ENCODE measurements at regions of chr10 and their contacts with region 1.

Region 1: GRCh38 chr10:26881600-26882331 is 21.0 kb upstream of the ABI1 start:
- DNase-seq: no peak
- H3K4me3 Mint-ChIP-seq: no peak overlapping the region
- H3K27ac Mint-ChIP-seq: no peak overlapping the region
- H3K4me1 Mint-ChIP-seq: no peaks in the 10 kb centered on the region
- H3K27me3 Mint-ChIP-seq: peaks cover 12% of the 10 kb centered on the region

Region 2: GRCh38 chr10:26682931-26683330 is 198.8 kb before region 1 on chr10:
- CTCF ChIA-PET with region 1: interaction called, 7 read pairs
- POLR2A ChIA-PET with region 1: no interaction called
- intact Hi-C with region 1: loop called (anchors 1 kb)
- DNase-seq: no peak
- H3K4me3 Mint-ChIP-seq: no peak overlapping the region
- H3K27ac Mint-ChIP-seq: peak overlapping the region; percentile 57
- H3K4me1 Mint-ChIP-seq: peaks cover 19% of the 10 kb centered on the region
- H3K27me3 Mint-ChIP-seq: peaks cover 4% of the 10 kb centered on the region

Region 3: GRCh38 chr10:26770069-26770468 is 111.7 kb before region 1 on chr10:
- CTCF ChIA-PET with region 1: no interaction called
- POLR2A ChIA-PET with region 1: no interaction called
- intact Hi-C with region 1: no loop called
- DNase-seq: no peak
- H3K4me3 Mint-ChIP-seq: no peak overlapping the region
- H3K27ac Mint-ChIP-seq: no peak overlapping the region
- H3K4me1 Mint-ChIP-seq: peaks cover 20% of the 10 kb centered on the region
- H3K27me3 Mint-ChIP-seq: no peaks in the 10 kb centered on the region

Region 4: GRCh38 chr10:26821699-26822570 is 59.8 kb before region 1 on chr10:
- CTCF ChIA-PET with region 1: no interaction called
- POLR2A ChIA-PET with region 1: no interaction called
- intact Hi-C with region 1: no loop called
- DNase-seq: no peak
- H3K4me3 Mint-ChIP-seq: no peak overlapping the region
- H3K27ac Mint-ChIP-seq: peak overlapping the region; percentile 53
- H3K4me1 Mint-ChIP-seq: peaks cover 59% of the 10 kb centered on the region
- H3K27me3 Mint-ChIP-seq: no peaks in the 10 kb centered on the region

Region 5: GRCh38 chr10:26869528-26869927 is 12.2 kb before region 1 on chr10:
- CTCF ChIA-PET with region 1: interaction called, 10 read pairs
- POLR2A ChIA-PET with region 1: no interaction called
- intact Hi-C with region 1: no loop called
- DNase-seq: peak; percentile 59
- H3K4me3 Mint-ChIP-seq: no peak overlapping the region
- H3K27ac Mint-ChIP-seq: peak overlapping the region; percentile 13
- H3K4me1 Mint-ChIP-seq: peaks cover 8% of the 10 kb centered on the region
- H3K27me3 Mint-ChIP-seq: no peaks in the 10 kb centered on the region

Region 6: DNA sequence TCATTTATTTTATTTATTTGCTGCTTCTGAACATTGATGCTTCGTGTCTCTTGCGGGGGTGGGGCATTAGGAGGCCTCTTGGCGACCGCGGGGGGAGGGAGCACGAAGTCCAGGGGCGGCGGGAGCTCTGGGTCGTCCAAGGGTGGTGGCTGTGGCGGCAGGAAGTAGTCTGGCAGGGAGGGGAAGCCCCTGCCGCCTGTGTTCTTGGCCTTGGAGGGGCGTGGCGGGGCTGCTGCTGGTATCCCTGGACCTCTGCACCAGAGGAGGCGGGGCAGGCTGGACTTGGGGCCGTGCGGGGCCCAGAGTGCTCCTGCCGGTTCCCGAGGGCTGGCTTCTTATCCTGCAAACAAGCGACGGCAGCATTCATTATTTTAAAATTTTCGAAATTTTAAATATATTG is 49.5 kb after region 1 on chr10:
- CTCF ChIA-PET with region 1: no interaction called
- POLR2A ChIA-PET with region 1: no interaction called
- intact Hi-C with region 1: no loop called
- DNase-seq: peak; percentile 24
- H3K4me3 Mint-ChIP-seq: no peak overlapping the region
- H3K27ac Mint-ChIP-seq: no peak overlapping the region
- H3K4me1 Mint-ChIP-seq: peaks cover 3% of the 10 kb centered on the region
- H3K27me3 Mint-ChIP-seq: no peaks in the 10 kb centered on the region

Region 7: GRCh38 chr10:27088119-27089044 is 206.6 kb after region 1 on chr10:
- CTCF ChIA-PET with region 1: no interaction called
- POLR2A ChIA-PET with region 1: no interaction called
- intact Hi-C with region 1: no loop called
- DNase-seq: no peak
- H3K4me3 Mint-ChIP-seq: no peak overlapping the region
- H3K27ac Mint-ChIP-seq: no peak overlapping the region
- H3K4me1 Mint-ChIP-seq: no peaks in the 10 kb centered on the region
- H3K27me3 Mint-ChIP-seq: no peaks in the 10 kb centered on the region